ENCODE measurements at regions of chr11 and their contacts with region 1.

Region 1: DNA sequence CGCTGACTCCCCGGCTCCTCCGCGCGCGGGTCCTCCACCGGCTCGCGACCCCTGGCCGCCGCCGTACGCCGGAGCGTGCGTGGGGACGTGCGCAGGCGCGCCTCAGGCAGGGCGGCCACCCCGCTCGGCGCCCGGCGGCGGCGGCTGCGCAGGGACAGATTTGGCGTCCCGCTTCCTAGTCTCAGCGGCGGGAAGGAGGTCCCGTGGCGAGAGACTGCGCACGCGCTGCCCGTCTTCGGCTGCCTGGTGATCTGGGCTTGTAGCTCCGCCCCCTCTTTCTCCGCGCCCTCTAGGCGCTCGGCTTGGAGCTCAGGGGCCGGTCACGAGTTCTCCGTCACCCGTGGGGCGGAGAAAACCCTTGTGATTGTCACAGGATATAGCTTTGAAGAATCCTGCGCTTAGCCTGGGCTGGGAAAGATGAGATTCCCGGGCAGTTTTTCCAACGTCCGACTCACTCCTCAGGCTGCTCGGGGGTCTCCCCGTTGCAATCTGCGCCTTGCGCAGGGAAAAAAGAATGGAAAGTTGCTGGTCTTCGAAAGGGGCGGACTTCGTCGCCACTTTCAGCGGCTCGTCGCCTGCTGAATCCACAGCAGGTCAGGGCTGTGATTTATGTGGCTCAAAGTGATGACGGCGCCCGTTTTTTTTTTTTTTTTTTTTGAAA is at the start of gene PATL1:
- DNase-seq: peak; percentile 99
- ATAC-seq: peak; percentile 94
- H3K4me3 Mint-ChIP-seq: peak within 1 kb of the TSS; percentile 88
- H3K27ac Mint-ChIP-seq: peak within 1 kb of the TSS; percentile 96
- H3K4me1 Mint-ChIP-seq: peaks cover 38% of the 10 kb centered on the region
- H3K27me3 Mint-ChIP-seq: no peaks in the 10 kb centered on the region
- CTCF ChIP-seq: no peak
- total RNA-seq, gene PATL1: 59.5 to 60.6 TPM

Region 2: DNA sequence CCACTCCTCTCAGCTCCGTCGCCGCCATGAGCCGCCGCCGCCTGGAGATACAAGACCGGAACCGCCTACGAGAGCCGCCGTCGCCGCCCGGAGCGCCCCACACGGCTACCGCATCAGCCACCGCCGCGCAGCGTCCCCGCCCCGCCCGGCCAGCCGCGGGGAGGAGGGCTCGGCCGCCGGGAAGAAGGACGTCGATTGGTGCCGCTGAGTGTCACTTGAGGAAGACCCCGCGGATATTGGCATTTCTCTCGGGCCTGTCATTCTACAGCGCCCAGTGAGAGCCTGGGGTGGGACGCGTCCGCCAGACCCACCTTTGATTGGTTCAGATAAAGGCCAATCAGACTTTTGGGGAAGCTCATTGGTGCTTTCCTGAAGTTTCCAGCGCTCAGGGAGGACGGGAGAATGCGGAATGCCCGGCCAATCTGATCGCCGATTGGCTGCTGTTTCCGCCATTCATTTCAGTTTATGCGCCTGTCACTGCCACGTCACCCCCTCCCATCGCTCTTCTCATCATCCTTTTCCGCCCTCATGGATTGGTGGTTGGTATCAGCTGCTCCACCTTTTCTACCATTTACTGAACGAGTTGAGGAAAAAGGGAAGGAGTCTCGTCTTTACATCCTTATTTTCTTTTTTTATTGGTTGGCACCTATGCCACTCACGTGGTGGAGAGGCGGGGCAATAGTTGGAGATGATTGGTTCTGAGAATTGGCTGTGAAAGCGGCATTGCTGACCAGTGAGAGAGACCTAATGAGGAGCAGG is 53.3 kb before region 1 on chr11 and contains the start of gene OSBP:
- CTCF ChIA-PET with region 1: interaction called, 4 read pairs
- POLR2A ChIA-PET with region 1: interaction called, 16 read pairs
- intact Hi-C with region 1: loop called (anchors 1 kb)
- DNase-seq: peak; percentile 99
- ATAC-seq: peak; percentile 85
- H3K4me3 Mint-ChIP-seq: peak within 1 kb of the TSS; percentile 96
- H3K27ac Mint-ChIP-seq: peak within 1 kb of the TSS; percentile 96
- H3K4me1 Mint-ChIP-seq: peaks cover 33% of the 10 kb centered on the region
- H3K27me3 Mint-ChIP-seq: no peaks in the 10 kb centered on the region
- CTCF ChIP-seq: no peak
- total RNA-seq, gene OSBP: 38.1 to 41.0 TPM

Region 3: GRCh38 chr11:59992425-59992824 is 323.3 kb after region 1 on chr11:
- CTCF ChIA-PET with region 1: no interaction called
- POLR2A ChIA-PET with region 1: no interaction called
- intact Hi-C with region 1: no loop called
- DNase-seq: no peak
- ATAC-seq: no peak
- H3K4me3 Mint-ChIP-seq: no peak overlapping the region
- H3K27ac Mint-ChIP-seq: no peak overlapping the region
- H3K4me1 Mint-ChIP-seq: no peaks in the 10 kb centered on the region
- H3K27me3 Mint-ChIP-seq: peaks cover 8% of the 10 kb centered on the region
- CTCF ChIP-seq: no peak